Naive thymus-derived CD4-positive, alpha-beta T cell (primary cell): ENCODE measurements at regions of chr16 and their contacts with region 1.

Region 1: GRCh38 chr16:86563489-86564345 is 2.9 kb upstream of the FOXC2 start:
- DNase-seq: peak; percentile 57 to 85 (median 81)
- ATAC-seq: peak; percentile 100
- H3K4me3 ChIP-seq: no peak overlapping the region
- H3K4me3 Mint-ChIP-seq: peak overlapping the region; percentile 45 to 86 (median 72)
- H3K27ac ChIP-seq: no peak overlapping the region
- H3K27ac Mint-ChIP-seq: peak overlapping the region in 2 of 9 donors; percentile 18 to 45
- H3K4me1 ChIP-seq: peaks cover 8 to 12% of the 10 kb centered on the region in 2 donors
- H3K4me1 Mint-ChIP-seq: peaks cover 10 to 37% (median 17%) of the 10 kb centered on the region in 7 donors
- H3K27me3 ChIP-seq: peaks cover 14 to 20% of the 10 kb centered on the region in 2 donors
- H3K27me3 Mint-ChIP-seq: peaks cover 40 to 48% (median 46%) of the 10 kb centered on the region in 5 donors

Region 2: DNA sequence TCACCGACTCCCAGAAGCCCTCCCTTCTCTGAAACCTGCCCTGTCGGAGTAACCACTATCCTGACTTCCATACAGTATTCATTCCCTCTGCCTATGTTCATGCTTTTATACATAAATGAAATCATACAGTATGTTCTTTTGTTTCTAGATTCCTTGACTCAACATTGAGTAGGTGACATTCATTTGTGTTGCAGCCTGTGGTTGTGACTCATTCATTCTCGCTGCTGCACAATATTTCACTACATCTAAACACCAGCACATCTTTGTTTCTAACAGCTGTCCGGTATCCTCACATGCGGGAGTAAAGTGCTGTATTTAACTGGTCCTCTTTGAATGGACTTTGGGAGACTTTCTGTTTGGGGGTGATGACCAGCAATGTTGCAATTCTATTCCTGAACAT is 188.4 kb before region 1 on chr16:
- CTCF ChIA-PET with region 1: no interaction called
- POLR2A ChIA-PET with region 1: no interaction called
- intact Hi-C with region 1: no loop called
- DNase-seq: no peak
- ATAC-seq: no peak
- H3K4me3 ChIP-seq: no peak overlapping the region
- H3K4me3 Mint-ChIP-seq: no peak overlapping the region
- H3K27ac ChIP-seq: no peak overlapping the region
- H3K27ac Mint-ChIP-seq: no peak overlapping the region
- H3K4me1 ChIP-seq: no peaks in the 10 kb centered on the region
- H3K4me1 Mint-ChIP-seq: no peaks in the 10 kb centered on the region
- H3K27me3 ChIP-seq: no peaks in the 10 kb centered on the region
- H3K27me3 Mint-ChIP-seq: peaks cover 0 to 29% (median 11%) of the 10 kb centered on the region in 5 donors

Region 3: DNA sequence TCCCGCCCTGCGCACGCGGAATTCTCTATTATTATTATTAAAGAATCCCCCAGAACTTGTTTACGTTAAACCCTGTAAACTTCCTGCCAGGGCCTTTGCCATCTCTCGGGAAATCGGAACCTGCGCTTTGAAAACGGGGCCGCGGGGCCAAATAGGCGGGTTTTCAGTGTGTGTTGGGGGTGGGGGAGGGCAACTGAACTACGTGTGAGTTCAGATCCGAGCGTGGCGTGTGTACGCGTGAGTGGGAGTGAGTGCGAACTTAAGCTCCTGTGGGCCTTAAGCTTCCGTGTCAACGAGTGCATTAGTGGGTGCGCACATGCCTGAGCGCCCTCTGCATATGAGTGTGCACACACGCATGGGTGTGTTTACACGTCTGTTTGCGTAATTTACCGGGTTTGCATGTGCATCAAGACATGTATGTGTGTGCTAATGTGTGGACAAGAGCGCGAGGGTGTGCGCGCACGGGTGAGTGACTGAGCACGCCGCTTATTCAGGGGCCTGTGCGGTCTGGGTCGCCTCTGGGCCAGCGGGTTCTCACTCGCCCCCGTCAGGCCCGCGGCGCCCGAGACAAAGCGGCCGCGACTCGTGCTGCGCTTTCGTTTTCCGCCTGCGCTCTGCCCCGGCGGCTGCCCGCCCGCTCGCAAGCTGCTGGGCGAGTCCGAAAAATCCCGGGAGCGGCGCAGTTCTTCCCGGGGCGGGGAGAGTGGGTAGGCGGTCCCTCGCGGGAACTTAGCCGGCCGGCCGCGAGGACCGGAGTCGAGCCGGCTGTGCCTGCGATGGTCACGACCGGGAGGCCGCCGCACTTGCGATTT is 54.6 kb before region 1 on chr16:
- CTCF ChIA-PET with region 1: no interaction called
- POLR2A ChIA-PET with region 1: no interaction called
- intact Hi-C with region 1: loop called in 1 of 2 experiments (anchors 5 kb)
- DNase-seq: peak in 1 of 9 donors; percentile 56
- ATAC-seq: no peak
- H3K4me3 ChIP-seq: peak overlapping the region; percentile 24
- H3K4me3 Mint-ChIP-seq: peak overlapping the region; percentile 74 to 91 (median 84)
- H3K27ac ChIP-seq: no peak overlapping the region
- H3K27ac Mint-ChIP-seq: peak overlapping the region in 1 of 9 donors; percentile 83
- H3K4me1 ChIP-seq: no peaks in the 10 kb centered on the region
- H3K4me1 Mint-ChIP-seq: peaks cover 11 to 41% (median 38%) of the 10 kb centered on the region in 7 donors
- H3K27me3 ChIP-seq: peaks cover 6 to 7% of the 10 kb centered on the region in 2 donors
- H3K27me3 Mint-ChIP-seq: peaks cover 61 to 75% (median 64%) of the 10 kb centered on the region in 5 donors

Region 4: GRCh38 chr16:86761111-86762031 is 197.7 kb after region 1 on chr16:
- CTCF ChIA-PET with region 1: no interaction called
- POLR2A ChIA-PET with region 1: no interaction called
- intact Hi-C with region 1: loop called (anchors 2 to 5 kb)
- DNase-seq: peak in 6 of 9 donors; percentile 3 to 54 (median 16)
- ATAC-seq: peak; percentile 37
- H3K4me3 ChIP-seq: no peak overlapping the region
- H3K4me3 Mint-ChIP-seq: no peak overlapping the region
- H3K27ac ChIP-seq: no peak overlapping the region
- H3K27ac Mint-ChIP-seq: no peak overlapping the region
- H3K4me1 ChIP-seq: no peaks in the 10 kb centered on the region
- H3K4me1 Mint-ChIP-seq: peaks cover 0 to 6% (median 0%) of the 10 kb centered on the region in 7 donors
- H3K27me3 ChIP-seq: peaks cover 0 to 5% of the 10 kb centered on the region in 2 donors
- H3K27me3 Mint-ChIP-seq: peaks cover 33 to 49% (median 44%) of the 10 kb centered on the region in 5 donors

Region 5: DNA sequence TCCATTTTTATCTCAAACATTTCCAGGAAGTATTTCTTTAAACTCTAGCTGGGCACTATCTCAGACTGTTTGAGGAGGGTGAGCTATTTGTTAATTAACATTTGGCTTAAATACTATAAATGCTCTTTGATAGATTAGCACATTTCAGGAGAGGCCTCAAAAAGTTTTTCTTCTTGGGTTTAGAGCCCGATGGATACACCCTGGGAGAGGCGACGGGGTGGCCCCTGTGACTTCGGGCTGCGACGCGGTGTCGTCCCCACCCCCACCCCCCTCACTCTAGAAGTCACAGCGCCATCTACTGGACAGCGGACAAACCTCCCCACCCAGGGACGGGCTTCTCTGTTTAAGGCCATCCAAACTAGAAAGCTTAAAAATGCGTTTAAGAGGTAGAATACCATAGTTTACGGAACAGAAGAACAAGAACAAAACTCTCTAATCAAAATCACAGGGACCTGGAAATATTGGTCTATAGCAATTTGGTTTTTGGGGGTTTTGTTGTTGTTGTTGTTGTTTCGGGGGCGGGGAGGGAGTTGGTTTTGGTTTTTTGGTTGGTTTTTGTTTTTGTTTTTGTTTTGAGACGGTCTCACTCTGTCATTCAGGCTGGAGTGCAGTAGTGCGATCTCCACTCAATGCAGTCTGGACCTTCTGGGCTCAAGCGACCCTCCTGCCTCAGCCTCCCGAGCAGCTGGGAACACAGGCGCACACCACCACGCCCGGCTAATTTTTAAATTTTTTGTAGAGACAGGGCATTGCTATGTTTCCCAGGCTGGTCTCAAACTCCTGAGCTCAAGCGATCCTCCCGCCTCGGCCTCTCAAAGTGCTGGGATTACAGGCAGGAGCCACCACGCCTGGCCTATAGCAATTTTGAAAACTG is 499.1 kb after region 1 on chr16:
- CTCF ChIA-PET with region 1: interaction called, 4 read pairs
- POLR2A ChIA-PET with region 1: no interaction called
- intact Hi-C with region 1: loop called in 1 of 2 experiments (anchors 1 kb)
- DNase-seq: peak in 5 of 9 donors; percentile 9 to 49 (median 24)
- ATAC-seq: peak; percentile 69
- H3K4me3 ChIP-seq: no peak overlapping the region
- H3K4me3 Mint-ChIP-seq: no peak overlapping the region
- H3K27ac ChIP-seq: no peak overlapping the region
- H3K27ac Mint-ChIP-seq: no peak overlapping the region
- H3K4me1 ChIP-seq: no peaks in the 10 kb centered on the region
- H3K4me1 Mint-ChIP-seq: peaks cover 0 to 7% (median 0%) of the 10 kb centered on the region in 7 donors
- H3K27me3 ChIP-seq: peaks cover 0 to 8% of the 10 kb centered on the region in 2 donors
- H3K27me3 Mint-ChIP-seq: peaks cover 41 to 61% (median 47%) of the 10 kb centered on the region in 5 donors

Region 6: DNA sequence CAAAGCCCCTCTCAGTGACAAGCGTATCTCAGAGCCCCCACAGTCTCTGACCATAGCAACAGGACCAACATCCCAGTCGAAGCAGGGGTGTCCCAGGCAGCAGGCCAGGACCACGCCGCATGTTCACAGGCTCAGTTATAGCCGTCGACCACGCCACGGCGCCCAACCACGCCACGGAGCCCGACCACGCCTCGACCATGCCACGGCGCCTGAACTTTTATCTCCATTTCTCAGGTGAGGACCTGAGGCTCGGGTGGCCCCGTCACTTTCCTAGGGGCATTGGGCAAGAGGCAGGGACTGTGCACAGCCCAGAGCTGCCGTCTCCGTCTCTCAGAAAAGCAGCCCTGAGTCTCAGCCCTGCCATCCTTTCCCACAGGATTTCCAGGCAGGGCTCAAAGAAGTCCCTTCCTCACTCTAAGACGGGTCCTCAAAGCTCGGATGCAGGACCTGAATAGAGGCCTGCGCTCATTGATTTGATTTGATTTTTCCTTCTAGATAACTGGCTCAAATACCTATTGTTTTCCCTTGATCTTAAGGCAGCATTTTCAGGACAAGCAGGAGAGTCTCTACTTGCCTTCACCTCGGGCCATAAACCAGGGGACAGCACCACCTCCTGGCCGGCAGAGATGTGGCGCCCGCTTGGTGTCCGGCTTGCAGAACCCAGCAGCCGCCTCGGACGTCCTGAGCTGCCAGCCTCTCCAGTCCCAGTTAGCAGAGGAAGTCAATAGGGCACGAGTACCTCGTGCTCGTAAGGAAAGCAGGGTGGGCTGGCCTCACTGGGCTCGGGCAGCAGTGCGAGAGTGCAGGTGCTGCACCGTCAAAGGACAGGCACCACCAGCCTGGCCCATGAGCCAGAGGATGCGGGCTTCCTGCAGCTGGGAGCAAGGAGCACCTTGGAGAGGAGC is 714.7 kb after region 1 on chr16:
- CTCF ChIA-PET with region 1: no interaction called
- POLR2A ChIA-PET with region 1: no interaction called
- intact Hi-C with region 1: loop called in 1 of 2 experiments (anchors 1 kb)
- DNase-seq: peak in 3 of 9 donors; percentile 12 to 57 (median 14)
- ATAC-seq: peak; percentile 45
- H3K4me3 ChIP-seq: no peak overlapping the region
- H3K4me3 Mint-ChIP-seq: no peak overlapping the region
- H3K27ac ChIP-seq: no peak overlapping the region
- H3K27ac Mint-ChIP-seq: no peak overlapping the region
- H3K4me1 ChIP-seq: no peaks in the 10 kb centered on the region
- H3K4me1 Mint-ChIP-seq: peaks cover 0 to 16% (median 5%) of the 10 kb centered on the region in 7 donors
- H3K27me3 ChIP-seq: no peaks in the 10 kb centered on the region
- H3K27me3 Mint-ChIP-seq: peaks cover 0 to 14% (median 11%) of the 10 kb centered on the region in 5 donors

Region 7: GRCh38 chr16:87387942-87388817 is 824.5 kb after region 1 on chr16:
- CTCF ChIA-PET with region 1: no interaction called
- POLR2A ChIA-PET with region 1: no interaction called
- intact Hi-C with region 1: loop called in 1 of 2 experiments (anchors 10 kb)
- DNase-seq: peak; percentile 46 to 95 (median 88)
- ATAC-seq: peak; percentile 75
- H3K4me3 ChIP-seq: peak overlapping the region; percentile 27
- H3K4me3 Mint-ChIP-seq: peak overlapping the region; percentile 27 to 78 (median 68)
- H3K27ac ChIP-seq: peak overlapping the region; percentile 86
- H3K27ac Mint-ChIP-seq: peak overlapping the region; percentile 87 to 99 (median 96)
- H3K4me1 ChIP-seq: peaks cover 17 to 29% of the 10 kb centered on the region in 2 donors
- H3K4me1 Mint-ChIP-seq: peaks cover 15 to 55% (median 44%) of the 10 kb centered on the region in 7 donors
- H3K27me3 ChIP-seq: no peaks in the 10 kb centered on the region
- H3K27me3 Mint-ChIP-seq: peaks cover 0 to 2% (median 0%) of the 10 kb centered on the region in 5 donors